ENCODE measurements at regions of chr2 and their contacts with region 1.

Region 1: GRCh38 chr2:174603280-174603679 is 5.7 kb upstream of the WIPF1 start:
- DNase-seq: no peak
- ATAC-seq: peak; percentile 48
- H3K4me3 ChIP-seq: no peak overlapping the region
- H3K27ac ChIP-seq: no peak overlapping the region
- H3K4me1 ChIP-seq: peaks cover 44% of the 10 kb centered on the region
- H3K27me3 ChIP-seq: no peaks in the 10 kb centered on the region
- CTCF ChIP-seq: peak; percentile 66 to 76 (median 70)
- EP300 ChIP-seq: no peak
- POLR2A ChIP-seq: no peak
- RAD21 ChIP-seq: peak; percentile 68

Region 2: DNA sequence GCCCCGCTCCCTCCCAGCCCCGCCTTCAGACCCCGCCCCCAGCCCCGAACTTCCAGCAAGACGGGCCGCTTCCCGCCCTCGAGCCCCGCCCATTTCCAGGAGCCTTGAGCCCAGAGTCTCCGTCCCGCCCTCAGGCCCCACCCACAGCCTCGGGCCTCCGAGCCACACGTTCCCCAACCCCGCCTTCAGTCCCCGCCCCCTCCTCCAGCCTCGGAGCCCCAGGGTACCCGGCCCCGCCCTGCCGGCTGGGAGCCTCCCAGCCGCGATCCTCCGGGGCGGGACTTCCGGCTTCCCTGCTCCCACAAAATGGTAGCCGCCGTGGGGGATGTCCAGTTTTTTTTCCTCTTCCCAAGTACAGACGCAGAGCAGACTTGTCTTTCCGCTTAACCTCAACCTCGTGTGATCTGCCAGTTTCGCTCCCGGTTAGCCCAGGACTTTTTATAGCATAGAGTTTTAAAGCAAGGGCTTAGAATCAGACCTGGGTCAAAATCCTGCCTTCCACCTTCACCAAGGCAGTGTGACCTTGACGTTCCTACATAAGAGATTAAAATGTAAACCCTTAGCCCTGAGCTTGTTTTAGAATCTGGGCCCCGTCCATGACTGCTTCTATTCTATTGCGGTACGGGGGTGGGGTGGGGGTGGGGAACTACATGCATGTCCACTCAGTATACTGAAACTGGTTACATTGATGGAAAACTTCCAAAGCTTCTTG is 116.0 kb before region 1 on chr2:
- CTCF ChIA-PET with region 1: interaction called, 11 read pairs
- POLR2A ChIA-PET with region 1: interaction called, 10 read pairs
- RAD21 ChIA-PET with region 1: interaction called, 8 read pairs
- SMC1A ChIA-PET with region 1: interaction called, 3 read pairs
- in situ Hi-C with region 1: no loop called
- intact Hi-C with region 1: loop called (anchors 5 kb)
- DNase-seq: peak; percentile 85
- ATAC-seq: peak; percentile 96
- H3K4me3 ChIP-seq: peak overlapping the region; percentile 81
- H3K27ac ChIP-seq: peak overlapping the region; percentile 85
- H3K4me1 ChIP-seq: peaks cover 9% of the 10 kb centered on the region
- H3K27me3 ChIP-seq: no peaks in the 10 kb centered on the region
- CTCF ChIP-seq: no peak
- EP300 ChIP-seq: no peak
- POLR2A ChIP-seq: peak; percentile 55
- RAD21 ChIP-seq: no peak

Region 3: GRCh38 chr2:174546581-174547506 is 56.4 kb before region 1 on chr2:
- CTCF ChIA-PET with region 1: interaction called, 15 read pairs
- POLR2A ChIA-PET with region 1: no interaction called
- RAD21 ChIA-PET with region 1: interaction called, 13 read pairs
- SMC1A ChIA-PET with region 1: interaction called, 7 read pairs
- in situ Hi-C with region 1: no loop called
- intact Hi-C with region 1: no loop called
- DNase-seq: no peak
- ATAC-seq: peak; percentile 85
- H3K4me3 ChIP-seq: no peak overlapping the region
- H3K27ac ChIP-seq: no peak overlapping the region
- H3K4me1 ChIP-seq: no peaks in the 10 kb centered on the region
- H3K27me3 ChIP-seq: no peaks in the 10 kb centered on the region
- CTCF ChIP-seq: peak; percentile 52 to 71 (median 55); a peak in 5 of 6 replicates
- EP300 ChIP-seq: no peak
- POLR2A ChIP-seq: no peak
- RAD21 ChIP-seq: peak; percentile 84

Region 4: GRCh38 chr2:174577967-174578589 is 25.2 kb before region 1 on chr2:
- CTCF ChIA-PET with region 1: interaction called, 261 read pairs
- POLR2A ChIA-PET with region 1: interaction called, 5 read pairs
- RAD21 ChIA-PET with region 1: interaction called, 159 read pairs
- SMC1A ChIA-PET with region 1: interaction called, 193 read pairs
- in situ Hi-C with region 1: no loop called
- intact Hi-C with region 1: loop called (anchors 1 kb)
- DNase-seq: no peak
- ATAC-seq: peak; percentile 71
- H3K4me3 ChIP-seq: no peak overlapping the region
- H3K27ac ChIP-seq: no peak overlapping the region
- H3K4me1 ChIP-seq: peaks cover 7% of the 10 kb centered on the region
- H3K27me3 ChIP-seq: no peaks in the 10 kb centered on the region
- CTCF ChIP-seq: peak; percentile 60 to 77 (median 64); a peak in 5 of 6 replicates
- EP300 ChIP-seq: no peak
- POLR2A ChIP-seq: no peak
- RAD21 ChIP-seq: peak; percentile 88

Region 5: GRCh38 chr2:174623690-174624089 is 20.4 kb after region 1 on chr2:
- CTCF ChIA-PET with region 1: interaction called, 5 read pairs
- POLR2A ChIA-PET with region 1: interaction called, 4 read pairs
- RAD21 ChIA-PET with region 1: interaction called, 292 read pairs
- SMC1A ChIA-PET with region 1: interaction called, 512 read pairs
- in situ Hi-C with region 1: no loop called
- intact Hi-C with region 1: no loop called
- DNase-seq: no peak
- ATAC-seq: peak; percentile 61
- H3K4me3 ChIP-seq: no peak overlapping the region
- H3K27ac ChIP-seq: no peak overlapping the region
- H3K4me1 ChIP-seq: no peaks in the 10 kb centered on the region; the same call in 1 of the 2 replicates
- H3K27me3 ChIP-seq: no peaks in the 10 kb centered on the region
- CTCF ChIP-seq: no peak
- EP300 ChIP-seq: no peak
- POLR2A ChIP-seq: no peak
- RAD21 ChIP-seq: no peak

Region 6: GRCh38 chr2:174682578-174683391 is 79.5 kb after region 1 on chr2:
- CTCF ChIA-PET with region 1: interaction called, 534 read pairs
- POLR2A ChIA-PET with region 1: interaction called, 30 read pairs
- RAD21 ChIA-PET with region 1: interaction called, 294 read pairs
- SMC1A ChIA-PET with region 1: interaction called, 537 read pairs
- in situ Hi-C with region 1: loop called (anchors 25 kb)
- intact Hi-C with region 1: loop called (anchors 2 kb)
- DNase-seq: no peak
- ATAC-seq: peak; percentile 66
- H3K4me3 ChIP-seq: peak overlapping the region; percentile 79
- H3K27ac ChIP-seq: no peak overlapping the region
- H3K4me1 ChIP-seq: peaks cover 4% of the 10 kb centered on the region; the same call in 1 of the 2 replicates
- H3K27me3 ChIP-seq: peaks cover 0 to 2% of the 10 kb centered on the region in 2 experiments; a peak in 2 of 4 replicates
- CTCF ChIP-seq: no peak
- EP300 ChIP-seq: no peak
- POLR2A ChIP-seq: no peak
- RAD21 ChIP-seq: no peak